ENCODE measurements at regions of chr10 and their contacts with region 1.

Region 1: DNA sequence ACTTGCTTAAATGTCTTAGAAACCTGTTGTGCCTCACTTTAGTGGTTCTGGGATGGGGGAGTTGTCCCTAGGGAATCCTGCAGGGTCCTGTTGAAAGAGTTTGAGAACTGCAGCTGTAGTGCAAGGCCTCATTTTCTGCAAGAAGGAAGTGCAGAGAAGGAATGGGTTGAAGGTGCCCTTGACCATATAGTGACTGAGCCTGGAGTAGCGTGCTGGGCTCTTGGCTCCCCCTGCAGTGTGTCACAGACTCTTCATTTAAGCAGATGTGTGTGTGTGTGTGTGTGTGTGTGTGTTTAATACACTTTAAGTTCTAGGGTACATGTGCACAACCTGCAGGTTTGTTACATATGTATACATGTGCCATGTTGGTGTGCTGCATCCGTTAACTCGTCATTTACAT is 92.2 kb downstream of the GRK5 start:
- DNase-seq: no peak
- ATAC-seq: no peak
- H3K4me3 ChIP-seq: no peak overlapping the region
- H3K27ac ChIP-seq: peak overlapping the region in 2 of 10 donors; percentile 4 to 54
- H3K4me1 ChIP-seq: peaks cover 21 to 80% (median 52%) of the 10 kb centered on the region in 9 donors
- H3K27me3 ChIP-seq: no peaks in the 10 kb centered on the region
- CTCF ChIP-seq: peak in 1 of 9 donors; percentile 28

Region 2: DNA sequence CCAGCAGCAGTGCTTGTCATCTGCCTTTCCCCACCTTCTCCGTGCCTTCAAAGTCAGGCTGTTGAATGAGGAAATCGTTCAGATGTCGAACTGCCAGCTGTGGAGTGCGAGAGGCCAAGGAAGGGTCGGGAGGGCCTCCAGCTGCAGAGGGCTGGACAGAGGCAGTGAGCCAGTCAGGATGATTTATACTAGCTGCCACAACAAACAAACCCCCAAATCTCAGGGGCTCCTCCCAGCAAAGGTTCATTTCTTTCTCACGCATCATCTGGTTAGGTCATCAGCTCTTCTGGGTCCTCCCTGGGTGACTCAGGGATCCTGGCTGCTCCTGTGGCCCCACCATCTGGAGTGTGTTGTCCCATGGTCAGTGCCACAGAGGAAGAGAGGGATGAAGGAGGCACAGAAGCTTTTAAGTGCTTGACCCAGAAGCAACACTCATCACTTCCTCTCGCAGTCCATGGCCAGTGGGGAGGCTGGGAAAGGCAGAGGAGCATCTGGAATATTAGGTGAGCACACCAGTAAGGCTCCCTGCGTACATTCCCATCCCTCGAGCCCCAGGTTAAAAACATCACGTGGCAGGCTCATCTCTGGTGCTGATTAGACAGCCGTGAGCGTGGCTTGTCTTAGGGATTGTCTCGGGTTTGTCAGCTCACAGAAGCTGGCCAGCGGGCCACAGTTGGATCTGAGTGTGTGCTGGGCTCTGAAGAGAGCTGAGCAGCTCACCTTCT is 102.3 kb after region 1 on chr10:
- intact Hi-C with region 1: loop called in 1 of 10 experiments (anchors 5 kb)
- DNase-seq: peak; percentile 70 to 82
- ATAC-seq: peak; percentile 70 to 92 (median 82)
- H3K4me3 ChIP-seq: no peak overlapping the region
- H3K27ac ChIP-seq: peak overlapping the region in 9 of 10 donors; percentile 65 to 82 (median 74)
- H3K4me1 ChIP-seq: peaks cover 14 to 61% (median 48%) of the 10 kb centered on the region in 9 donors
- H3K27me3 ChIP-seq: no peaks in the 10 kb centered on the region
- CTCF ChIP-seq: no peak

Region 3: DNA sequence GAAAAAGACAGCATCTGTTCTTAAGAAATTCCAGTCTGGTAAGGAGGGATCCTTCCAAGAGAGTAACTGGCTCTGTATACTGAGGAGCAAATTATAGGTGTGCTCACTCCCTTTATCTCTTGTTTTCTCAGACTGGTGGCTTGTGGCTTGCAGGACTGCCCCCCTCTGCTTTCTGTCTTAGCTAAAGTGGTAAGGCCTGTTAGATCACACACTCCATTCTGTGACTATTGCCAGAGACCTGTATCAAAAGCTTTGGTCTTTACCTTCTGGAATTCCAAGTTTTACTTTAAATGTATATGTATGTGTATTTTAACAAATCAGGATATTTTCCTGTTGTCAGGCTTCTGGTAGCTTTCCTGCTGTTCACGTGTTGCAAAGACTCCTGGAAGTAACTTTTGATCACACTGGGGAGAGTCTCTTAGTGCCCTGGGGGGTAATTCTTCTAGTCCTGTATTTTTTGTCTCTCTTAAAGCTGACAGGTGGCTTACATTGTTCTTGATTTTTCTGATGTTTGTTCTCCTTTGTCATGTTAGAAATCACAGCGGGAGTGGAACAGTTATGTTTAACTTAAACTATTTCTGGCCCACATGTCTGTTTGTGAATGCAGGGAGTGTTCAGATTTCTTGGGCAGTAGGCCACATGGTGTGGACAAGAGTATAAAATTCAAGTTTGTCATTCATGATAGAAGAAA is 1256.5 kb after region 1 on chr10:
- intact Hi-C with region 1: no loop called
- DNase-seq: no peak
- ATAC-seq: no peak
- H3K4me3 ChIP-seq: no peak overlapping the region
- H3K27ac ChIP-seq: no peak overlapping the region
- H3K4me1 ChIP-seq: no peaks in the 10 kb centered on the region
- H3K27me3 ChIP-seq: peaks cover 0 to 3% (median 0%) of the 10 kb centered on the region in 7 donors
- CTCF ChIP-seq: no peak